IMR-90 (cell line): ENCODE measurements at regions of chr22 and their contacts with region 1.

Region 1: GRCh38 chr22:42926768-42927167 is 69.7 kb upstream of the ARFGAP3 start:
- DNase-seq: no peak
- ATAC-seq: no peak
- H3K4me3 ChIP-seq: no peak overlapping the region
- H3K27ac ChIP-seq: no peak overlapping the region
- H3K4me1 ChIP-seq: peaks cover 25% of the 10 kb centered on the region
- H3K27me3 ChIP-seq: no peaks in the 10 kb centered on the region
- CTCF ChIP-seq: no peak
- POLR2A ChIP-seq: no peak
- RAD21 ChIP-seq: no peak

Region 2: DNA sequence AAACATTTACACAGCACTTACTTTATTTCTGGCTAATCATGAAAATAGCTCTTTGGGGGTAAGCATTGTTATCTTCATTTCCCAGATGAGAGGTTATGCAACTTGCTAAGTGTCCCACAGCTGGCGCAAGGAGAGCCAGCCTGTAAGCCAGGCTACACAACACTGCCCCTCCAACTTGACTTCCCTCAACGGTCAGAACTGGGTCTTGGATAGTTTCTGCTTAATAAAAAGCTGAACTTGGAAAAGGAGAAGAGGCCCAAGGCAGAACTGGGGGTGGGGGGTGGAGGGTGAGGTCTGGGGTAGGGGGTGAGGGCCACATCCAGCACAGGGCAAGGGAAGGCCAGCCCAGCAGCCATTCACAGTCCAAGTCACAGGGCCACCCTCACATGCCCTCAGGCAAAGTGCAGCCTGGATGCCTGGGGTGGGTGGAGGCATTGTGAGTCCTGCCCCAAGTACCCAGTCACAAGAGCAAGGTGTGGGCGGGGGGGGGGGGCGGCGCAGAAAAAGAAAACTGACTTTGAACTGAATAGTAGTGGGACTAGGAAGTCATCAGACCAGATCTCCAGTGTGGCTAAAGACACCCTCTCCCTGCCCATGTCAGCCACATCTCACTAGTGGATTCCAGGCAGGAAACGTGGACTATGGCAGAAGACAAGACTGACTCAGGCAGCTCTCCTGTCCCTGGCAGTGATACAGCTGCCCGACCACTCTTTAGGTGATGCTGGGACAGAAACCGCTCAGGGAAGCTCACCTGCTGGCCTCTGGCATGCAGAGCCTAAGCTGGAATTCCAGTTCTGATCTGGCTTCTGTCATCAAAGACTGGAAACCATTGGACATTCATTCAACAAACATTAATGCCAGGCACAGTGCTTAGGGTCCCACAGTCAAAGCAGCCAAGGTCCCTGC is 35.8 kb after region 1 on chr22:
- CTCF ChIA-PET with region 1: no interaction called
- POLR2A ChIA-PET with region 1: interaction called, 11 read pairs
- dilution Hi-C with region 1: no loop called
- in situ Hi-C with region 1: no loop called
- intact Hi-C with region 1: no loop called
- DNase-seq: peak; percentile 47
- ATAC-seq: peak; percentile 57
- H3K4me3 ChIP-seq: no peak overlapping the region
- H3K27ac ChIP-seq: 0 out of 2 replicates have a peak overlapping the region, but pooled peaks have one; percentile 29
- H3K4me1 ChIP-seq: peaks cover 28% of the 10 kb centered on the region
- H3K27me3 ChIP-seq: no peaks in the 10 kb centered on the region
- CTCF ChIP-seq: no peak
- POLR2A ChIP-seq: no peak
- RAD21 ChIP-seq: no peak